Caco-2 (cell line): ENCODE measurements at regions of chr1 and their contacts with region 1.

Region 1: DNA sequence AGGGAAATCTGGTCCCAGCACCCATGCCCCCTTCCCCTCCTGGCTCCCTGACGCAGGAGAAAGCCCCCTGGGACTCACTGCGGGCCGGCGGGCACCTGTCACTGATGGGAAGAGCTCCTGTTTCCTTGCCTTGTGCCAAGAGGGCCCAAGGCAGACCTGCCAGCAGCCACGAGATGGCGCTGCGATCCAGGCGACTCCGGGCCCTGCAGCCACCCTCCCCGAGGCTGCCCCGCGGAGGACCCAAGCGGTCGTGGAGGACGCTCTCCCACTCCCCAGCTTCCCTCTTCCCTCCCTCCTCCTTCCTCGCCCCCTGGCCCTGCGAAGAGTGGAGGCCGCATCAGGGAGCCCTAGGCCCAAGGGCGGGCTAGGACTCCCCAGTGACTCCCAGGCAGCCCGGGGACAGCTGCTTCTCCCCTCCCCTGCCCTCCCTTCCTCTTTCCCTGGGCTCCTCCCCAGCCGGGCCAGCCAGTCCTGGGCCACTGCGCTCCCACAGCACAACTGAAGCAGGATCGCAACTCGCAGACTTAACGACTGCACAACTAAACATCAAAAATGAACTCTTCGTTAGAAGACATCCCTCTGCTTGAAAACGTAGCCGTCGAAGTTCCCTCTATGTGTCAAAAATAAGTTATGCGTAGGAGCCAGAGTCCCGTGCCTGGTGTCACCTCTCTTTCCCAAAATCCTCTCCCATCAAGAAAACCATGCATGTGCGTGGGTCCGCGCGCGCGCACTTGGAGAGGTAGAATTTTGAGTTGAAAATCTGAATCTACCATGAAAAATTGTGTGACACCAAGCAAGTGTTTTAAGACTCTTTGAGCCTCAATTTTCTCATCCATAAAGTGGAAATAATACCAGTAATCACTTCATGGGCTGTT is 34.2 kb downstream of the BATF3 start:
- DNase-seq: peak; percentile 76 to 90
- H3K4me3 ChIP-seq: peak overlapping the region; percentile 89
- H3K4me3 Mint-ChIP-seq: peak overlapping the region; percentile 74
- H3K27ac Mint-ChIP-seq: peak overlapping the region; percentile 35
- H3K4me1 ChIP-seq: no peaks in the 10 kb centered on the region
- H3K4me1 Mint-ChIP-seq: peaks cover 6% of the 10 kb centered on the region
- H3K27me3 ChIP-seq: no peaks in the 10 kb centered on the region
- H3K27me3 Mint-ChIP-seq: peaks cover 12% of the 10 kb centered on the region
- CTCF ChIP-seq: peak; percentile 94 to 98

Region 2: GRCh38 chr1:212512731-212513559 is 152.5 kb before region 1 on chr1:
- CTCF ChIA-PET with region 1: no interaction called
- POLR2A ChIA-PET with region 1: no interaction called
- intact Hi-C with region 1: no loop called
- DNase-seq: no peak
- H3K4me3 ChIP-seq: no peak overlapping the region
- H3K4me3 Mint-ChIP-seq: no peak overlapping the region
- H3K27ac Mint-ChIP-seq: no peak overlapping the region
- H3K4me1 ChIP-seq: peaks cover 6% of the 10 kb centered on the region; the same call in 1 of the 2 replicates
- H3K4me1 Mint-ChIP-seq: peaks cover 10% of the 10 kb centered on the region
- H3K27me3 ChIP-seq: no peaks in the 10 kb centered on the region
- H3K27me3 Mint-ChIP-seq: no peaks in the 10 kb centered on the region
- CTCF ChIP-seq: no peak

Region 3: DNA sequence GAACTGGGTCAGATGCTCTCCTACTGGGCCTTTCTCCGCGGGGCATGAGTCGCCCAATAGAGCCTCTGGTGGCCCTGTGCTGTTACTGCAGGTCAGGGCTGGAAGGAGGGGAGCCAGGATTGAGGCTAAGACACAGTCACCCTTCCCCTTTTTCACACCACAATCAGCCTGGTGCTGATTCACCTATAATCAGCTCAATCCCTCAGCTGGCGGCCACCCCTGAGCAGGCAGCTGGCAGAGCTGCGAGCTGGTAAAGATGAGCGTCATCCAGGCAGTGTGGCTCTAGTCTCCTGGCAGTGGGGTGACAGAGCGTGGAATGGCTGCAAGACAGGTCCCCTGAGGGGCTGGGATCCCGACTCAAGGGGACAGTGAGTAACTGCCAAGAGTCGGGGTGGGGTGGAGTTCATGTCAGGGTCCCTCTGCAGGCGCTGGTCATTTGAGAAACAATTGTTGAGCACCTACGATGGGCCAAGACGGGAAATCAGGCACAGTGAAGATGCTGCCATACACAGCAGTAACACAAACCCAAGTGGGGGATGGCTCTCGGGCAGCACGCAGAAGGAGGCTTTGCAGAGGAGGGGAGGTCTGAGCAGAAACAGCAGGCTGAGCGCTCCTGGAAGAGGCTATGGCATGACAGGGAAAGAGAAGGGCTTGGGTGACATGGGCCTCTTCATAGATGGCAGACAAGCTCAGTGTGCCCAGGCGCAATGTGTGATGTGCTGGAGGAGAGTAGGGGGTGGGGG is 35.1 kb before region 1 on chr1:
- CTCF ChIA-PET with region 1: interaction called, 13 read pairs
- POLR2A ChIA-PET with region 1: no interaction called
- intact Hi-C with region 1: no loop called
- DNase-seq: peak; percentile 54 to 58
- H3K4me3 ChIP-seq: no peak overlapping the region
- H3K4me3 Mint-ChIP-seq: no peak overlapping the region
- H3K27ac Mint-ChIP-seq: no peak overlapping the region
- H3K4me1 ChIP-seq: no peaks in the 10 kb centered on the region; the same call in 1 of the 2 replicates
- H3K4me1 Mint-ChIP-seq: no peaks in the 10 kb centered on the region
- H3K27me3 ChIP-seq: no peaks in the 10 kb centered on the region
- H3K27me3 Mint-ChIP-seq: peaks cover 3% of the 10 kb centered on the region
- CTCF ChIP-seq: peak; percentile 77 to 88

Region 4: DNA sequence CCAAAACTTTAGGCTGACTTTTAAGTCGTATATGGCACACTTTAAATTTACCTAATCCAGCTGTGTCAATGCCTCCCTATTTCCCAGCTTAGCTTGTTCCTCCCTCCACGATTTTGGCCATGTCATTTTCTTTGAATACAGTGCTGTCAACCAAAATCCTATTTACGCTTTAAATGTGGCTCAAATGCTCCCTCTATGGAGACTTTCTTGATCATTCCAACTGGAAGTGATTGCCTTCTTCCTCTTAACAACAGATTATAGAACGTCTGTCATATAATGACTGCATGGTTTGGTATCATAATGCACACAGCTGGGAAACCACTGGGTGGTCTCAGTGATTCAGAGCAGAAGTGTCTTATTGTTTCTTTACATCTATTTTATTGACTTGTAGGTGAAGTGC is 53.0 kb after region 1 on chr1:
- CTCF ChIA-PET with region 1: interaction called, 7 read pairs
- POLR2A ChIA-PET with region 1: no interaction called
- intact Hi-C with region 1: loop called (anchors 1 kb)
- DNase-seq: no peak
- H3K4me3 ChIP-seq: no peak overlapping the region
- H3K4me3 Mint-ChIP-seq: no peak overlapping the region
- H3K27ac Mint-ChIP-seq: no peak overlapping the region
- H3K4me1 ChIP-seq: peaks cover 15% of the 10 kb centered on the region
- H3K4me1 Mint-ChIP-seq: peaks cover 8% of the 10 kb centered on the region
- H3K27me3 ChIP-seq: no peaks in the 10 kb centered on the region; the same call in 1 of the 2 replicates
- H3K27me3 Mint-ChIP-seq: peaks cover 20% of the 10 kb centered on the region
- CTCF ChIP-seq: peak in 1 of 2 experiments; percentile 27

Region 5: DNA sequence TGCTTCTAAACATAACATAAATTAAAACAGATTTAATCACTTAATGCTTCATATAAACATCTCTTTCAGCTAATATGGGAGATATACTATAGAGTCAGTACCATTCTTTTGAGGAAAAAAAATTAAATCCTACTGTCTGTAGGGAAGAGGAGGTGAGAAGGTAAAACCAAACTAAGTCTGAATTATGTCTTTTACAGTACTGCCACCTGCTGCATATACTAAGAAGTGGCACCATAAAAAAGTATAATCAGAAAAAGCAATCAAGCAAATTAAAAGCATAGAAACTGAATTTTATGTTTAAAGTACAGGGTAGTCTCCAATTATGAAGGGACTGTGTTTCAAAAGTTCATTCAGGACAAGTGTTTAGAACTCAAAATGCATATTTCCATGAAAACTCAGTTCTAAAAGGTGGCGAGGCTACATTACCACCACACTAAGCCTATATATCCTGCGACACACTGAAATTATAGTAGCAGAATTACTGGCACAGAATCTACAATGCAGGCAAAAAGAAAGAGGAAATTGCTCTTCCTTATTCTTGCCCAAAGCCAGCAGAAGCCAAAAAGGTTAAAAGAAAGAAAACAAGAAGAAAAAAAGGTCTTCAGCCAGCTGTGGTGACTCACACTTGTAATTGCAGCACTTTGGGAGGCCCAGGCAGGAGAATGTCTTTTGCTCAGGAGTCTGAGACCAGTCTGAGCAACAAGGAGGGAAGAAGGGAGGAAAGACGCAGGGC is 117.1 kb after region 1 on chr1:
- CTCF ChIA-PET with region 1: interaction called, 6 read pairs
- POLR2A ChIA-PET with region 1: no interaction called
- intact Hi-C with region 1: loop called (anchors 1 kb)
- DNase-seq: no peak
- H3K4me3 ChIP-seq: no peak overlapping the region
- H3K4me3 Mint-ChIP-seq: no peak overlapping the region
- H3K27ac Mint-ChIP-seq: no peak overlapping the region
- H3K4me1 ChIP-seq: no peaks in the 10 kb centered on the region
- H3K4me1 Mint-ChIP-seq: no peaks in the 10 kb centered on the region
- H3K27me3 ChIP-seq: no peaks in the 10 kb centered on the region
- H3K27me3 Mint-ChIP-seq: no peaks in the 10 kb centered on the region
- CTCF ChIP-seq: peak; percentile 52 to 60